B cell (primary cell): ENCODE measurements at regions of chr12 and their contacts with region 1.

Region 1: DNA sequence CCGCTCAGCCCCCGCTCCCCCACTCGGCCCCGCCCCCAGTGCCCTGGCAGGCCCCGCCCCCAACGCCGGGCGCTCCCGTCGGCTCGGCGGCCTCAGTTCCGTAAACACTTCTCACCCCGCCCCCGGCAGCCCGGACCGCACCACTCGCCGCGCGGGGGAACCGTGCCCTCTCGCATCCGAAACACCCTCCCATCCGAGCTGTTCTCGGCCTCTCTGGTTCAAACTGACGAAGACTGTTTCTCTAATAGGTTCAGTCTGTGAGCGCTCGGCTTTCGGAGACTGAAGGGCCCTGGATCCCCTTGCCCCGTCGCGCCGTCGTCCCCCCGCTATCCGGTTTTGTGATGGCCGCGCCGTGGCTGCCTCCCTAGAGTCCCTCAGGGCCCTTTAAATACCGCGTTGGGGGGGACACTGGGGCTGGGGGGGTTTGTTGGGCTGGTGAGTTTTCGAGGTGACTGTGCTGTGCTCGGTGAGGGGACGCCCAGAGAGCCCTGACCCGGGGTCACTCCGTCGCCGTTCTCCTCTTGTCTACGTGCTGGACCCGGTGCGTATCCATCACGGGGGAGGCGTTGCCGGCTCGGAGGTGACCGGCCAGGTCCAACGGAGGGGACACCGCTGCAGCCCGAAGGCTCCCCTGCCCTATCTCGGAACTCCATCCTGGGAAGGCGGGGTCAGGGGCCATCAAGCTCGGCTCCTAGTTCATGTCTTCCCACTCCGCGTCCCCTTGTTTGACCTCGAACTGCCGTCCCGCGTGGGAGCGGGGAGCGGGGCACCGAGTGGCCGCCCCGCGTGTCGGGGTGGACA is at the start of gene TCP11L2:
- DNase-seq: peak; percentile 96
- ATAC-seq: peak; percentile 58
- H3K4me3 ChIP-seq: peak within 1 kb of the TSS; percentile 84 to 100 (median 99)
- H3K4me3 Mint-ChIP-seq: peak within 1 kb of the TSS; percentile 94
- H3K27ac ChIP-seq: peak within 1 kb of the TSS; percentile 98 to 99
- H3K27ac Mint-ChIP-seq: peak within 1 kb of the TSS; percentile 100
- H3K4me1 ChIP-seq: peaks cover 43 to 48% of the 10 kb centered on the region in 2 donors
- H3K4me1 Mint-ChIP-seq: peaks cover 65% of the 10 kb centered on the region
- H3K27me3 ChIP-seq: no peaks in the 10 kb centered on the region
- H3K27me3 Mint-ChIP-seq: no peaks in the 10 kb centered on the region
- CTCF ChIP-seq: no peak
- total RNA-seq, gene TCP11L2: 306 and 315 TPM in 2 replicates

Region 2: DNA sequence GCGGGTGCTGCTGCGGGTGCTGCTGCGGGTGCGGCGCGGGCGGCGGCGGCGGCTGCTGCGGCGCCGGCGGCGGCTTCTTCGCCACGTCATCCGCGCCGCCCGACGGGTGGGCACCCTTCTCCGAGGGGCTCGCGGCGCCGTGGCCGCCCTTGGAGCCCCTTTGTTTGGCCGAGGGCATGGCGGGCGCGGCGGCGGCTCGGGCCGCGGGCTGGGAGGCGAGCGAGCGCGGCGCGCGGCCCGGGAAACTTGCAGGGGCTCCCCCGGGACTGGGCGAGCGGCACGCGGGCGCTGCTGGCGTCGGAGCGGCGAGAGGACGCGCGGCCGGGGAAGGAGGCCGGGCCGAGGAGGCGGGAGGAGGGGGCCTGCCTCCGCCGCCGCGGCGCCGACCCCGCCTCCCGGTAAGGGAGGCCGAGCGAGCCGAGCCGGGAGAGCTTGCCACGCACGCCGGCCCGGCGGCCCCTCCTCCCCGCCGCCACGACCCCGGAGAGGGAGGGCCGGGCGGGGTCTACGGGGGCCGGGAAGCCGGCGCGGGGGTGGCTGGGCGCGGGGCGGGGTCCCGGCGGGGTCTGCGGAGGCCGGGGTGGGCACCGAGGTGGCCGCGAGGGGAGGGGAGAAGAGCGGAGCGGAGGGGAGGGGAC is 54.8 kb before region 1 on chr12 and contains the start of gene CKAP4:
- CTCF ChIA-PET with region 1: interaction called, 12 read pairs
- POLR2A ChIA-PET with region 1: interaction called, 62 read pairs
- intact Hi-C with region 1: loop called (anchors 1 kb)
- DNase-seq: peak; percentile 80
- ATAC-seq: peak; percentile 61
- H3K4me3 ChIP-seq: peak within 1 kb of the TSS; percentile 53 to 77 (median 71)
- H3K4me3 Mint-ChIP-seq: peak within 1 kb of the TSS; percentile 85
- H3K27ac ChIP-seq: peak within 1 kb of the TSS; percentile 73 to 85
- H3K27ac Mint-ChIP-seq: peak within 1 kb of the TSS; percentile 88
- H3K4me1 ChIP-seq: peaks cover 36 to 52% of the 10 kb centered on the region in 2 donors
- H3K4me1 Mint-ChIP-seq: peaks cover 58% of the 10 kb centered on the region
- H3K27me3 ChIP-seq: peaks cover 0 to 16% (median 4%) of the 10 kb centered on the region in 4 experiments
- H3K27me3 Mint-ChIP-seq: no peaks in the 10 kb centered on the region
- CTCF ChIP-seq: no peak
- total RNA-seq, gene CKAP4: 27.3 and 29.2 TPM in 2 replicates

Region 3: GRCh38 chr12:106276032-106276740 is 26.4 kb before region 1 on chr12:
- CTCF ChIA-PET with region 1: interaction called, 17 read pairs
- POLR2A ChIA-PET with region 1: interaction called, 23 read pairs
- intact Hi-C with region 1: loop called (anchors 1 kb)
- DNase-seq: peak; percentile 20
- ATAC-seq: peak; percentile 93
- H3K4me3 ChIP-seq: peak overlapping the region in 3 of 5 experiments; percentile 13 to 45 (median 28)
- H3K4me3 Mint-ChIP-seq: peak overlapping the region; percentile 89
- H3K27ac ChIP-seq: no peak overlapping the region
- H3K27ac Mint-ChIP-seq: peak overlapping the region; percentile 96
- H3K4me1 ChIP-seq: peaks cover 18 to 19% of the 10 kb centered on the region in 2 donors
- H3K4me1 Mint-ChIP-seq: peaks cover 41% of the 10 kb centered on the region
- H3K27me3 ChIP-seq: no peaks in the 10 kb centered on the region
- H3K27me3 Mint-ChIP-seq: no peaks in the 10 kb centered on the region
- CTCF ChIP-seq: no peak

Region 4: DNA sequence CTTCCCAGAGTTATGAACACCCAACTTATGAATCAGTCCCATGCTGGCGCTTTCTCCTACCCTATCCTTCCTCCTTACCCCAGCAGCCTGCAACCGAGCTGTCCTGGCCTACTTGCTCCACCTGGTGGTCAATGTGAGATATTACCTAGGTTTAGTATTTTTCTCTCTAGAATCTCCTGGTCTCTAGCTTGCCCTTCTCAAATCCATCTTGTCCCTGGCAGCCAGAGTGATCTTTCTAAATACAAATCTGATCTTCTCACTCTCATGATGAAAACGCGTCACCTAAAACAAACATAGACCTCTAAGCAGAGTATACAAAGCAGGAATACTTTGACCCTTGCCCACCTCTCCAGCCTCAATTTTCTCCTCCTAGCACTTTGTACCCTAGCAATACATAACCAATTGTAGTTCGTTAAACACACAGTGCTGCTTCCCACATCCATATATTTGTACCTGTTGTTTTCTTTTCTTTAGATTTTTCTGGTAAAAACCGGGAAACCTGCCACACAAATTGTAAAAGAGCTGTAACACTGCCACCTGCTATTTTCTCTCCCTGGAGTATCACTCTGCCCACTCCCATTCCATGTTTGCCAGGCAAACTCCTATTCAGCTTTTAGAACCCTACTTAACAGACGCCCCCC is 20.0 kb before region 1 on chr12:
- CTCF ChIA-PET with region 1: interaction called, 158 read pairs
- POLR2A ChIA-PET with region 1: interaction called, 23 read pairs
- intact Hi-C with region 1: loop called (anchors 1 kb)
- DNase-seq: peak; percentile 75
- ATAC-seq: peak; percentile 82
- H3K4me3 ChIP-seq: no peak overlapping the region
- H3K4me3 Mint-ChIP-seq: no peak overlapping the region
- H3K27ac ChIP-seq: no peak overlapping the region
- H3K27ac Mint-ChIP-seq: peak overlapping the region; percentile 2
- H3K4me1 ChIP-seq: peaks cover 7 to 8% of the 10 kb centered on the region in 2 donors
- H3K4me1 Mint-ChIP-seq: peaks cover 37% of the 10 kb centered on the region
- H3K27me3 ChIP-seq: peaks cover 0 to 11% (median 0%) of the 10 kb centered on the region in 4 experiments
- H3K27me3 Mint-ChIP-seq: peaks cover 20% of the 10 kb centered on the region
- CTCF ChIP-seq: peak; percentile 88

Region 5: DNA sequence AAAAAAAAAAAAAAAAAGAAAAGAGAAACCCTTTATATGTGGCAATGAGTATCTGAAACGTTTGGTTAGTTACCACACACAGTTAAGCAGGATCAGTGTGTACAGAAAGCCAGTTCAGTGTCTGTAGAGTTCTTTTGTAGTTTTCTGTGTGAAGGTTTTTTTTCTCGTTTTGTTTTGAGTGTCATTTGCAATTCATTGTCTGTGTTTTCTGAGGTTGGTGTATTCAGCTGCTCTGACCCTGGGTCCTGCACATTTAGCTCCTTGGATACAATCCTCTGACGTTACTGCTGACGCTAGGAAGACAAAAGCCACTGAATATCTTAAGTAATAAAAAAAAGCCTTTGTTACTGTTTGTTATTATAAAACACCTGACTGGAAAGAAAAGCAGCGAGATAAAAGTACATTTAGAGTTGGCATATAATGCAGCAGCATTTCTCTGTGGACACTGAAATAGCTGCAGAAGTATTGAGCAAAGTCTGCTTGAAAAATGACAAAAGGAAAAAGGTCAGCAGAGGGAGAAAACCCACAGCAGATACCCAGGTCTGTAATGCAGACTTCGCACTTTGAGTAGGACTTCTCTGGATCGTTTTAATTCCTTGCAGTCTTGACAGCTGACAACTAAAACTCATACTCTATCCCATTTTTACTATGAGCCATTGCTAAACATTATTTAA is 144.0 kb after region 1 on chr12:
- CTCF ChIA-PET with region 1: no interaction called
- POLR2A ChIA-PET with region 1: no interaction called
- intact Hi-C with region 1: no loop called
- DNase-seq: no peak
- ATAC-seq: no peak
- H3K4me3 ChIP-seq: no peak overlapping the region
- H3K4me3 Mint-ChIP-seq: no peak overlapping the region
- H3K27ac ChIP-seq: no peak overlapping the region
- H3K27ac Mint-ChIP-seq: no peak overlapping the region
- H3K4me1 ChIP-seq: no peaks in the 10 kb centered on the region
- H3K4me1 Mint-ChIP-seq: no peaks in the 10 kb centered on the region
- H3K27me3 ChIP-seq: no peaks in the 10 kb centered on the region
- H3K27me3 Mint-ChIP-seq: no peaks in the 10 kb centered on the region
- CTCF ChIP-seq: no peak

Region 6: GRCh38 chr12:106774005-106774807 is 471.6 kb after region 1 on chr12 and contains the start of gene RIC8B:
- CTCF ChIA-PET with region 1: no interaction called
- POLR2A ChIA-PET with region 1: no interaction called
- intact Hi-C with region 1: loop called (anchors 5 kb)
- DNase-seq: peak; percentile 74
- ATAC-seq: peak; percentile 86
- H3K4me3 ChIP-seq: peak within 1 kb of the TSS; percentile 67 to 77 (median 70)
- H3K4me3 Mint-ChIP-seq: peak within 1 kb of the TSS; percentile 96
- H3K27ac ChIP-seq: peak within 1 kb of the TSS in 1 of 2 donors; percentile 69
- H3K27ac Mint-ChIP-seq: peak within 1 kb of the TSS; percentile 88
- H3K4me1 ChIP-seq: peaks cover 16 to 17% of the 10 kb centered on the region in 2 donors
- H3K4me1 Mint-ChIP-seq: peaks cover 27% of the 10 kb centered on the region
- H3K27me3 ChIP-seq: peaks cover 0 to 14% (median 2%) of the 10 kb centered on the region in 4 experiments
- H3K27me3 Mint-ChIP-seq: peaks cover 8% of the 10 kb centered on the region
- CTCF ChIP-seq: no peak
- total RNA-seq, gene RIC8B: 12.7 and 14.8 TPM in 2 replicates

Region 7: DNA sequence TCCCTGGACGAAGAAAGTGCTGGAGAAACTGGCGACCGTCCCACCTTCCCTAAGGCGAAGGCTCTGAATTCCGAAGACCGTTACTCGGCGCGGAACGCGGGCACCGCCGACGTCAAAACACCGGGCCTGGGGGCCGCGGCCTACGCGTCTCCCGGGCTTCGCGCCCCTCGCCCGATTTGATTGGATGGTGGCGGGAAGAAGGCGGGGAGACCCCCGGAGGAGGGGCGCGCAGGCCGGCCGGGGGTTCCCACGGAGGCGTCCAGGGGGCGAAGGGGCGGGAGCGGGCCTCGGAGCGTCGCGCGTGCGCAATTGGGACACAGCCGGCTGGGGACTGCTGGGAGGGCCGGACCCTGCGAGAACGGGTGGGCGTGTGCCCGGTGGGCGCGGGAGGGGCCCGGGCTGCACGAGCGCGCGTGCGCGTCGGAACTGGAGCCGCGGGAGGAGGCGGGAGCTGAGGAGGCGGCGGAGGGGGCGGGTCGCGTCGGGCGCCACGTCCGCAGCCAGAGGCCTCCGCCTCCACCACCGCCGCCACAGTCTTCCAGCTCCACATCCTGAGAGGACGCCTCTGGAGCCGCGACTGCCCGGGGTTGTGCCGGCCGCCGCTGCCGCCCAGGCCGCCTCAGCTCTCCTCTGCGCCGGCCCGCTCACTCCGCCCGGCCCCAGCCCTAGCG is 652.9 kb after region 1 on chr12 and contains the start of gene TMEM263:
- CTCF ChIA-PET with region 1: no interaction called
- POLR2A ChIA-PET with region 1: interaction called, 3 read pairs
- intact Hi-C with region 1: loop called (anchors 1 kb)
- DNase-seq: peak; percentile 94
- ATAC-seq: peak; percentile 84
- H3K4me3 ChIP-seq: peak within 1 kb of the TSS; percentile 67 to 89 (median 88)
- H3K4me3 Mint-ChIP-seq: peak within 1 kb of the TSS; percentile 99
- H3K27ac ChIP-seq: peak within 1 kb of the TSS; percentile 49 to 57
- H3K27ac Mint-ChIP-seq: peak within 1 kb of the TSS; percentile 93
- H3K4me1 ChIP-seq: peaks cover 9 to 12% of the 10 kb centered on the region in 2 donors
- H3K4me1 Mint-ChIP-seq: peaks cover 20% of the 10 kb centered on the region
- H3K27me3 ChIP-seq: no peaks in the 10 kb centered on the region
- H3K27me3 Mint-ChIP-seq: no peaks in the 10 kb centered on the region
- CTCF ChIP-seq: no peak
- total RNA-seq, gene TMEM263: 23.5 and 26.7 TPM in 2 replicates

Region 8: GRCh38 chr12:107093417-107094182 is 791.0 kb after region 1 on chr12 and contains the start of gene CRY1:
- CTCF ChIA-PET with region 1: no interaction called
- POLR2A ChIA-PET with region 1: no interaction called
- intact Hi-C with region 1: loop called (anchors 2 kb)
- DNase-seq: peak; percentile 94
- ATAC-seq: peak; percentile 84
- H3K4me3 ChIP-seq: peak within 1 kb of the TSS; percentile 54 to 83 (median 79)
- H3K4me3 Mint-ChIP-seq: no peak within 1 kb of the TSS
- H3K27ac ChIP-seq: peak within 1 kb of the TSS; percentile 95 to 96
- H3K27ac Mint-ChIP-seq: no peak within 1 kb of the TSS
- H3K4me1 ChIP-seq: peaks cover 16 to 24% of the 10 kb centered on the region in 2 donors
- H3K4me1 Mint-ChIP-seq: peaks cover 9% of the 10 kb centered on the region
- H3K27me3 ChIP-seq: peaks cover 0 to 8% (median 3%) of the 10 kb centered on the region in 4 experiments
- H3K27me3 Mint-ChIP-seq: peaks cover 19% of the 10 kb centered on the region
- CTCF ChIP-seq: no peak
- total RNA-seq, gene CRY1: 8.8 and 10.4 TPM in 2 replicates